HEK293 (cell line): ENCODE measurements at regions of chr2 and their contacts with region 1.

Region 1: GRCh38 chr2:1550658-1551316 is 137.5 kb downstream of the TPO start:
- H3K4me3 ChIP-seq: no peak overlapping the region
- H3K27ac ChIP-seq: no peak overlapping the region
- H3K4me1 ChIP-seq: no peaks in the 10 kb centered on the region
- CTCF ChIP-seq: peak; percentile 81

Region 2: GRCh38 chr2:714005-714741 is 836.6 kb before region 1 on chr2:
- CTCF ChIA-PET with region 1: interaction called, 18 read pairs
- POLR2A ChIA-PET with region 1: no interaction called
- H3K4me3 ChIP-seq: no peak overlapping the region
- H3K27ac ChIP-seq: no peak overlapping the region
- H3K4me1 ChIP-seq: no peaks in the 10 kb centered on the region
- CTCF ChIP-seq: no peak; the same call in 1 of the 2 replicates

Region 3: DNA sequence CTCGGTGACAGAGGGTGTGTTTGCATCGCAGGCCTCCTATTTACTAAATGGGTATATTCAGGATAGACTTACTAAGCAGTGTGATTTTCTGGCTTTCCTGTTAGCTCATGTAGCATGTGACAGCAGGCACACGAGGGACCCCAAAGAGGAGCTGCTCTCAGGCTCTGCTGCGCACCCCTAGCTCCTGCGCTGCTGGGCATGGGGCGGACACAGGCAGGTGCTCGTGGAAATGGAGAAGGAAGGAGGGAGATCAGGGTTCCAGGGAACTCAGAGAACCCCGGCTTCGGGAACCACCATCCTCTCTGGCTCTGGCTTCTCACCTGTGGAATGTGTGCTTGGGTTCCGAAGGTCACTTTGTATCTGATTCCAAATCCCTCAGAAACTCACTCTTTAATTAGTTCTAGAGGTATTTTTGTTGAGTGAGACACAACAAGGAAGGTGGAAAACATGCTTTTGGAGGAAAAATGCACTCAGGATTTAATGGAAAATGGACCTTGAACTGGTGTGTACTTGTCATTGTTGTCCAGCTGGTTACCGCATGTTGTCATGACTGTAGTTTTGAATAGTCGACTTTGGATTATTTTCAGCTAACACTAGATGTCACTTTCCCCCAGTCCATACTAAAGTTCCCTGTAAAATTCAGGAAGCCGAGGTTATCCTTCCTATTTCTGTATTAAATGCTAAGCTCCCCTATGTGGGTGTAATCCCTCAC is 596.7 kb before region 1 on chr2:
- CTCF ChIA-PET with region 1: interaction called, 14 read pairs
- POLR2A ChIA-PET with region 1: no interaction called
- H3K4me3 ChIP-seq: no peak overlapping the region
- H3K27ac ChIP-seq: no peak overlapping the region
- H3K4me1 ChIP-seq: no peaks in the 10 kb centered on the region
- CTCF ChIP-seq: peak; percentile 20; the same call in 1 of the 2 replicates

Region 4: GRCh38 chr2:1561811-1562421 is 11.1 kb after region 1 on chr2:
- CTCF ChIA-PET with region 1: interaction called, 10 read pairs
- POLR2A ChIA-PET with region 1: no interaction called
- H3K4me3 ChIP-seq: no peak overlapping the region
- H3K27ac ChIP-seq: no peak overlapping the region
- H3K4me1 ChIP-seq: no peaks in the 10 kb centered on the region
- CTCF ChIP-seq: no peak